CD8-positive, alpha-beta memory T cell (primary cell): ENCODE measurements at regions of chr17 and their contacts with region 1.

Region 1: DNA sequence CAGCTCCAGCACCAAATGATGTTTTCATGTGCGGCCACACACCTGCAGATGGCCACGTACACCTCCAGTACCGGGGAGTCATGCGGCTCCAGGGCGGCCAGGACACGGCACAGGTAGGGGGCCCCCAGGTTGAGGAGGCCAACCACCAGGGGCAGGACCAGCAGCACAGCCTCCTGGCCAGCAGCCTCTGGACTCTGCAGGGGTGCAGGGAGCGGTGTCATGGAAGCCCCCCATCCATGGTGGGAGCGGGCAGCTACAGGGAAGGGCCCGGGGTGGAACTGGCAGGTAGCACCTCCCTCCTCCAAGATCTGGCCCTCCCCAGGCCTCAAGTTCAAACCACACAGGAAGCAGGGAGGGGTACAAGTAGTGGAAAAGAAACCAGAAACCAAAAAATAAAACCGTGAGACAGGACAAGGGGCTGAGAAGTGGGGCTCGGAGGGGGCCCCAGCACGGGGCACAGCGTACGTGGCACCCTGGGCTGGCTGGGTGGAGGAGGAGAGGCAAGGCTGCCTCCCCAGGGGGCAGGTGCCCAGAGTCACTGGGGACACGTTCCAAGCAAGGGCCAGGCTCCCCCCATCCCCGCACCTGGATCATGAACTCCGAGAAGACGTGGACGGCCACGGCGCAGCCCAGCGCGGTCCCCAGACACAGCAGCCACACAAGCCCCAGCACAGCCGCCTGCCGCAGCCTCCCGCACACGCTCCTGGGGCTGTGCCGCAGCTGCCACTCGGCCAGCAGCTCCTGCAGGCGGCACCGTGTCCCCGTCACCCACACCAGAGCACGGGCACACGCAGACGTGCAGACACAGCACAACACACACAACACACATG is 7.4 kb downstream of the TMC6 start:
- DNase-seq: peak in 4 of 5 donors; percentile 50 to 81 (median 79)
- H3K4me3 ChIP-seq: peak overlapping the region; percentile 81
- H3K4me3 Mint-ChIP-seq: peak overlapping the region; percentile 78 to 92 (median 85)
- H3K27ac ChIP-seq: peak overlapping the region; percentile 0
- H3K27ac Mint-ChIP-seq: peak overlapping the region; percentile 84 to 98 (median 88)
- H3K4me1 ChIP-seq: peaks cover 81% of the 10 kb centered on the region
- H3K4me1 Mint-ChIP-seq: peaks cover 39 to 84% (median 43%) of the 10 kb centered on the region in 3 donors
- H3K27me3 ChIP-seq: no peaks in the 10 kb centered on the region
- H3K27me3 Mint-ChIP-seq: peaks cover 0 to 2% of the 10 kb centered on the region in 2 donors

Region 2: GRCh38 chr17:78063489-78063888 is 57.7 kb before region 1 on chr17:
- CTCF ChIA-PET with region 1: no interaction called
- POLR2A ChIA-PET with region 1: no interaction called
- DNase-seq: no peak
- H3K4me3 ChIP-seq: no peak overlapping the region
- H3K4me3 Mint-ChIP-seq: no peak overlapping the region
- H3K27ac ChIP-seq: no peak overlapping the region
- H3K27ac Mint-ChIP-seq: peak overlapping the region in 4 of 8 donors; percentile 18 to 59 (median 27)
- H3K4me1 ChIP-seq: no peaks in the 10 kb centered on the region
- H3K4me1 Mint-ChIP-seq: peaks cover 14 to 43% (median 22%) of the 10 kb centered on the region in 3 donors
- H3K27me3 ChIP-seq: no peaks in the 10 kb centered on the region
- H3K27me3 Mint-ChIP-seq: no peaks in the 10 kb centered on the region

Region 3: DNA sequence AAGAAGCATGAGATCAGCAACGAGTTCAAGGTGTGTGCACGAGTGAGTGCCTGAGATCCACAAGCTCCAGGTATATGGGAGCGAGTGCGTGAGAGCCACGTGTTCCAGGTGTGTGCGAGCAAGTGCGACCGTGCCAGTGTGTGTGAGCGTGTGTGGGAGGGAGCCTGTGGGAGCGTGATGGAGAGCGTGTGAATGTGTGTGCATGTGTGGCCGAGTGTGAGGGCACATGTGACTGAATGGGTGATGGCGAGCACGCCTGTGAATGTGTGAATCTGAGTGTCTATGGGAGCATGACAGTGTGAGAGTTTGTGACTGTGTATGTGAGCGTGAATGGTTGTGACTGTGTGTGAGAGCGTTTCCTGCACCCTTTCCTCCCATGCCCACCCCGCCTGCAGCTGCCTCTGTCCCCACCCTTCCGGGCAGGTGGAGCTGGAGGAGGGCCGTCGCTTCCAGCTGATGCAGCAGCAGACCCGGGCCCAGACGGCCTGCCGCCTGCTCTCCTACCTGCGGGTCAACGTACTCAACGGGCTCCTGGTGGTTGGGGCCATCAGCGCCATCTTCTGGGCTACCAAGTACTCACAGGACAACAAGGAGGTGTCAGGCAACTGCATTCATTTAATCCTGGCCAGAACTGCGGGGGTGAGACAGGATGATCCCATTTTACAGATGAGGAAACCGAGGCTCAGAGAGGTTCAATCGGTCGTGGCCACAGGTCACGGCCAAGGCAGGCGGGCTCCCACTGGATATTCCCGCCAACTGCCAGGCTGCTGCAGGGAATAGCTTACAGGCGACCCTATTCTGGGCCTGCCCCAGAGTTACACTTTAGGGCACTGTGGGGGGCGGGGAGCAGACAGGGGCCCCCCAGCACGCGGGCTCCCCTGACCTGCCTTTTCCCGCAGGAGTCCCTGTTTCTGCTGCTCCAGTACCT is 13.0 kb after region 1 on chr17:
- CTCF ChIA-PET with region 1: interaction called, 75 read pairs
- POLR2A ChIA-PET with region 1: interaction called, 333 read pairs
- DNase-seq: peak; percentile 73 to 90 (median 84)
- H3K4me3 ChIP-seq: peak overlapping the region; percentile 96
- H3K4me3 Mint-ChIP-seq: peak overlapping the region; percentile 79 to 100 (median 85)
- H3K27ac ChIP-seq: no peak overlapping the region
- H3K27ac Mint-ChIP-seq: peak overlapping the region; percentile 71 to 95 (median 88)
- H3K4me1 ChIP-seq: peaks cover 79% of the 10 kb centered on the region
- H3K4me1 Mint-ChIP-seq: peaks cover 62 to 80% (median 70%) of the 10 kb centered on the region in 3 donors
- H3K27me3 ChIP-seq: no peaks in the 10 kb centered on the region
- H3K27me3 Mint-ChIP-seq: peaks cover 0 to 3% of the 10 kb centered on the region in 2 donors

Region 4: DNA sequence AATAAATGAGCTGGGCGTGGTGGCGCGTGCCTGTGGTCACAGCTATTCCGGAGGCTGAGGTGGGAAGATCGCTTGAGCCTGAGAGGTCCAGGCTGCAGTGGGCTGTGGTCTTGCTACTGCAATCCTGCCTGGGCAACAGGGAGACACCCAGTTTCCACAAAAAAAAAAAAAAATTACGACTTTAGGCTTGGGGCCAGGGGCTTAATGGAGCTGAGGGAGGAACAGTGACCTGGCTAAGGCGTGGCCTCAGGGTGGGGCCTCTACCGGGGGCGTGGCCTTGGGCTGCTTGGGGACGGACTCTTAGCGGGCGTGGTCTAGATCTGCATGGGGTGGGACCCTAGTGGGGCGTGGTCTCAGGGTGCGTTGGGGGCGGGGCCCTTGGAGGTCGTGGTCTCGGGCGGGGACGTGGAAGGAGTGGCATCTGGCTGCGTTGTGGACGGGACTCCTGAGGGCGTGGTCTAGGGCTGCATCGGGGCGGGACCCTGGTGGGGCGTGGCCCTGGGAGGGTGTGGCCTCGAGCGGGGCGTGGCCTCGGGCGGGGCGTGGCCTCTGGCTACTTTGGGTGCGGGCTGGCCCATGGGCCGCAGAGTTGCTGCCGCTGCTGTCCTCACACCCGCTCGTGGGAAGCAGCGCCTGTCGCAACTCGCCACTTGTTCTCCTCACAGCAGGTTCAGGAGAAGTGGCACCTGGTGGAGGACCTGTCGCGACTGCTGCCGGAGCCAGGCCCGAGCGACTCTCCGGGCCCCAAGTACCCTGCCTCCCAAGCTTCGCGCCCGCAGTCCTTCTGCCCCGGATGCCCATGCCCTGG is 19.2 kb after region 1 on chr17:
- CTCF ChIA-PET with region 1: interaction called, 75 read pairs
- POLR2A ChIA-PET with region 1: interaction called, 333 read pairs
- DNase-seq: peak; percentile 92 to 95 (median 94)
- H3K4me3 ChIP-seq: peak overlapping the region; percentile 12
- H3K4me3 Mint-ChIP-seq: peak overlapping the region; percentile 32 to 82 (median 64)
- H3K27ac ChIP-seq: peak overlapping the region; percentile 54
- H3K27ac Mint-ChIP-seq: peak overlapping the region; percentile 87 to 95 (median 92)
- H3K4me1 ChIP-seq: peaks cover 76% of the 10 kb centered on the region
- H3K4me1 Mint-ChIP-seq: peaks cover 47 to 85% (median 59%) of the 10 kb centered on the region in 3 donors
- H3K27me3 ChIP-seq: no peaks in the 10 kb centered on the region
- H3K27me3 Mint-ChIP-seq: no peaks in the 10 kb centered on the region

Region 5: DNA sequence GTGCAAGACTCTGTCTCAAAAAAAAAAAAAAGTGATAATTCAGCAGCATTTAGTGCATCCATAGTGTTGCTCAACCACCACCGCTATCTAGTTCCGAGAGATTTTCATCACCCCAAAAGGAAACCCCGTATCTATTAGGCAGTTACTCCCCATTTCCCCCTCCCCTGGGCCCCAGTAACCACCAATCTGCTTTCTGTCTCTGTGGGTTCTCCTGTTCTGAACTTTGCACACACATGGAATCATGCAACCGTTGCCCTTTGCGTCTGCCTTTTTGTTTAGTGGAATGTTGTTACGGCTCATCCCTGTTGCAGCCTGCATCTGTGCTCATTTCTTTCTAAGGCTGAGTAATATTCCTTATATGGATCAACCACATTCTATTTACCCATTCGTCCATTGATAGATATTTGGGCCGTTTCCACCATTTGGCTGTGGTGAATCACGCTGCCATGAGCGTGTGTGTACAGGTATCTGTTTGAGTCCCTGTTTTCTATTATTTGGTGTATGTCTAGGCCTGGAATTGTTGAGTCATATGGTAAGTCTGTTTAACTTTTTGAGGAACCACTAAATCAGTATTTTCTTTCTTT is 38.5 kb after region 1 on chr17:
- CTCF ChIA-PET with region 1: no interaction called
- POLR2A ChIA-PET with region 1: no interaction called
- DNase-seq: no peak
- H3K4me3 ChIP-seq: no peak overlapping the region
- H3K4me3 Mint-ChIP-seq: no peak overlapping the region
- H3K27ac ChIP-seq: no peak overlapping the region
- H3K27ac Mint-ChIP-seq: peak overlapping the region in 1 of 8 donors; percentile 72
- H3K4me1 ChIP-seq: no peaks in the 10 kb centered on the region
- H3K4me1 Mint-ChIP-seq: peaks cover 0 to 5% (median 0%) of the 10 kb centered on the region in 3 donors
- H3K27me3 ChIP-seq: no peaks in the 10 kb centered on the region
- H3K27me3 Mint-ChIP-seq: peaks cover 0 to 2% of the 10 kb centered on the region in 2 donors